ENCODE measurements at regions of chr10 and their contacts with region 1.

Region 1: DNA sequence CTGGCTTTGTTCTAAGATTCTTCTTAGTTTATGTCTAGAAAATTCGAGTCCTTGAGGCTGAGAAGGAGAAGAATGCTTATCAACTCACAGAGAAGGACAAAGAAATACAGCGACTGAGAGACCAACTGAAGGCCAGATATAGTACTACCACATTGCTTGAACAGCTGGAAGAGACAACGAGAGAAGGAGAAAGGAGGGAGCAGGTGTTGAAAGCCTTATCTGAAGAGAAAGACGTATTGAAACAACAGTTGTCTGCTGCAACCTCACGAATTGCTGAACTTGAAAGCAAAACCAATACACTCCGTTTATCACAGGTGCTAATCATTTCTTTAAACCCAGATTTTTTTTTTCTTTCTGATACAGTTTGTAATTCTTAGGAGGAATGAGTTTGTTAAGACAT is 6.7 kb downstream of the CEP55 start:
- DNase-seq: no peak
- ATAC-seq: peak; percentile 79
- H3K4me3 Mint-ChIP-seq: no peak overlapping the region
- H3K27ac Mint-ChIP-seq: peak overlapping the region; percentile 27
- H3K4me1 Mint-ChIP-seq: peaks cover 45% of the 10 kb centered on the region
- H3K27me3 Mint-ChIP-seq: no peaks in the 10 kb centered on the region

Region 2: DNA sequence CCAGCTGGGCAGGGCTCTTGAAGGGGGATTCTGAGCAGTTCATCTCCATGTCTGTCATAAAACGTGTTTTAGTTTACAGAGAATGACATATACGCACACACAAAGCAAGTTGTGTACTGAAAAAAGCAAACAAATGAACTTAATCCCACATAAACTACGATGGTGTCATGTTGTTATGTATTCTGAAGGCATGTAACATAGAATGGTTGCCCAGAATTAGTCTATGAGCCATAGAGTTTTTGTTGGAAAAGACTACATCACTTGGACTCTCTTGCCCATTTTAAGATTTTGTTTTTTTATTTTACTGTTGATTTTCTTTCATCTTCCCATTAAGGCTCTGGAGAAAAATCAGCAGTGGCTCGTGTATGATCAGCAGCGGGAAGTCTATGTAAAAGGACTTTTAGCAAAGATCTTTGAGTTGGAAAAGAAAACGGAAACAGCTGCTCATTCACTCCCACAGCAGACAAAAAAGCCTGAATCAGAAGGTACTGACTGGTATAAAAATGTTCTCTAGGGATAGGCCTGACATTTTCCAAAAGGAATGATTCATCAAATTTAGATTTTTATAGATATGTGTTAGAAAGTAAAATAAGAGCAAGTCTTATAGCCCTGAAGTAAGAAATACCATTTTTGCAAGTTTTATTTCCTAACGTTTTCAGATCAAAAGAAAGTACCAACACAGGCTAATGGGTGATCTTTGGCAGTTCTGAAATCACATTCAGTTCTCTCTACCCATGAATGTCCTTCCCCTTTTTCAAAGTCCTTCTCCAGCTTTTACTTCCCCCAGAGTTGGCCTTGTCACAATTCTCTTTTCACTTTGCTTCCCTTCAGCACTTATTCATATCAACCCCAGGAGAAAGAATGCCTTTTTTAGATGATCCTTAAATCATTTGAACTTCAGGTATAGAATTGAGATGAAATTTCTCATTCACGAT is 12.3 kb after region 1 on chr10:
- CTCF ChIA-PET with region 1: interaction called, 18 read pairs
- POLR2A ChIA-PET with region 1: no interaction called
- intact Hi-C with region 1: no loop called
- DNase-seq: no peak
- ATAC-seq: no peak
- H3K4me3 Mint-ChIP-seq: no peak overlapping the region
- H3K27ac Mint-ChIP-seq: no peak overlapping the region
- H3K4me1 Mint-ChIP-seq: peaks cover 5% of the 10 kb centered on the region
- H3K27me3 Mint-ChIP-seq: no peaks in the 10 kb centered on the region

Region 3: GRCh38 chr10:93652857-93653256 is 149.8 kb after region 1 on chr10:
- CTCF ChIA-PET with region 1: no interaction called
- POLR2A ChIA-PET with region 1: no interaction called
- intact Hi-C with region 1: no loop called
- DNase-seq: no peak
- ATAC-seq: no peak
- H3K4me3 Mint-ChIP-seq: no peak overlapping the region
- H3K27ac Mint-ChIP-seq: no peak overlapping the region
- H3K4me1 Mint-ChIP-seq: no peaks in the 10 kb centered on the region
- H3K27me3 Mint-ChIP-seq: no peaks in the 10 kb centered on the region

Measured in activated CD4-positive, alpha-beta T cell treated with anti-CD3 and anti-CD28 coated beads for 36 hours (primary cell).